Common myeloid progenitor, CD34-positive (primary cell): ENCODE measurements at regions of chr12 and their contacts with region 1.

Region 1: GRCh38 chr12:124592472-124593160 is 25.2 kb upstream of the NCOR2 start:
- DNase-seq: peak in 2 of 3 donors; percentile 87 to 90
- H3K4me3 ChIP-seq: peak overlapping the region in 2 of 7 experiments; percentile 19 to 35
- H3K27ac ChIP-seq: no peak overlapping the region
- H3K4me1 ChIP-seq: peaks cover 3 to 38% (median 35%) of the 10 kb centered on the region in 4 experiments
- H3K27me3 ChIP-seq: no peaks in the 10 kb centered on the region

Region 2: GRCh38 chr12:124512667-124513296 is 79.8 kb before region 1 on chr12:
- CTCF ChIA-PET with region 1: no interaction called
- POLR2A ChIA-PET with region 1: no interaction called
- DNase-seq: peak in 1 of 3 donors; percentile 57
- H3K4me3 ChIP-seq: no peak overlapping the region
- H3K27ac ChIP-seq: no peak overlapping the region
- H3K4me1 ChIP-seq: peaks cover 0 to 73% (median 71%) of the 10 kb centered on the region in 4 experiments
- H3K27me3 ChIP-seq: no peaks in the 10 kb centered on the region

Region 3: DNA sequence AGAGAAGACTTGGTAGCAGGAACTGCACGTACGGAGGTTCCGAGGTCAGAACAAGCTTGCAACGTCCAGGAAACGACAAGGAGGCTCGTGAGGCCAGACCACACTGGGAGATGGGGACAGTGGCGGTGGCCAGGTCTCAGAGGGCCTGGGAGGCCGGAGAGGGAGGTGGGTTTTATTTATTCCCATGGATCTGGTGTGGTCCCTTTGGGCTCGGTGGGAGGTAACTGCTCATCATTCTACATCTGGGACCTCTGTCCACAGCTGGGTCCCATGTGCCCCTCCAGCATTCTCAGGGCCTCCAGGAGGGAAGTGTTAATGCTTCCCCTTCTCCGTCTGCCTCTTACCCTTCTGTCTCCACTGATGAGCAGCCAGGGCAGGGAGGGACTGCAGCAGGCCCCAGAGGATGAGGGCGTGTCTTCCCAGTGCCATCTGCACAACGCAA is 10.5 kb after region 1 on chr12:
- CTCF ChIA-PET with region 1: interaction called, 25 read pairs
- POLR2A ChIA-PET with region 1: interaction called, 3 read pairs
- DNase-seq: peak in 1 of 3 donors; percentile 32
- H3K4me3 ChIP-seq: no peak overlapping the region
- H3K27ac ChIP-seq: no peak overlapping the region
- H3K4me1 ChIP-seq: peaks cover 9 to 57% (median 48%) of the 10 kb centered on the region in 4 experiments
- H3K27me3 ChIP-seq: no peaks in the 10 kb centered on the region